Caco-2 (cell line): ENCODE measurements at regions of chr14 and their contacts with region 1.

Region 1: GRCh38 chr14:73026845-73027542 is at the start of gene ZFYVE1:
- DNase-seq: peak; percentile 96 to 97
- H3K4me3 ChIP-seq: peak within 1 kb of the TSS; percentile 74
- H3K4me3 Mint-ChIP-seq: peak within 1 kb of the TSS; percentile 91
- H3K27ac Mint-ChIP-seq: peak within 1 kb of the TSS; percentile 84
- H3K4me1 ChIP-seq: peaks cover 7% of the 10 kb centered on the region; the same call in 1 of the 2 replicates
- H3K4me1 Mint-ChIP-seq: no peaks in the 10 kb centered on the region
- H3K27me3 ChIP-seq: no peaks in the 10 kb centered on the region
- H3K27me3 Mint-ChIP-seq: no peaks in the 10 kb centered on the region
- CTCF ChIP-seq: no peak
- total RNA-seq, gene ZFYVE1: 10.8 and 10.9 TPM in 2 replicates

Region 2: GRCh38 chr14:72926292-72927028 is 100.5 kb before region 1 on chr14 and contains the start of gene DCAF4:
- CTCF ChIA-PET with region 1: no interaction called
- POLR2A ChIA-PET with region 1: no interaction called
- intact Hi-C with region 1: loop called (anchors 1 kb)
- DNase-seq: peak; percentile 97 to 99
- H3K4me3 ChIP-seq: peak within 1 kb of the TSS; percentile 78
- H3K4me3 Mint-ChIP-seq: peak within 1 kb of the TSS; percentile 87
- H3K27ac Mint-ChIP-seq: peak within 1 kb of the TSS; percentile 67
- H3K4me1 ChIP-seq: no peaks in the 10 kb centered on the region
- H3K4me1 Mint-ChIP-seq: no peaks in the 10 kb centered on the region
- H3K27me3 ChIP-seq: no peaks in the 10 kb centered on the region
- H3K27me3 Mint-ChIP-seq: peaks cover 6% of the 10 kb centered on the region
- CTCF ChIP-seq: no peak
- total RNA-seq, gene DCAF4: 20.1 and 21.1 TPM in 2 replicates

Region 3: GRCh38 chr14:73058224-73058921 is 31.4 kb after region 1 on chr14 and contains the start of gene RBM25:
- CTCF ChIA-PET with region 1: interaction called, 5 read pairs
- POLR2A ChIA-PET with region 1: interaction called, 35 read pairs
- intact Hi-C with region 1: loop called (anchors 1 kb)
- DNase-seq: peak; percentile 97 to 98
- H3K4me3 ChIP-seq: peak within 1 kb of the TSS; percentile 67
- H3K4me3 Mint-ChIP-seq: no peak within 1 kb of the TSS
- H3K27ac Mint-ChIP-seq: no peak within 1 kb of the TSS
- H3K4me1 ChIP-seq: peaks cover 12% of the 10 kb centered on the region; the same call in 1 of the 2 replicates
- H3K4me1 Mint-ChIP-seq: no peaks in the 10 kb centered on the region
- H3K27me3 ChIP-seq: no peaks in the 10 kb centered on the region
- H3K27me3 Mint-ChIP-seq: no peaks in the 10 kb centered on the region
- CTCF ChIP-seq: no peak
- total RNA-seq, gene RBM25: 89.3 and 98.8 TPM in 2 replicates

Region 4: GRCh38 chr14:73116079-73116665 is 89.2 kb after region 1 on chr14:
- CTCF ChIA-PET with region 1: no interaction called
- POLR2A ChIA-PET with region 1: interaction called, 12 read pairs
- intact Hi-C with region 1: no loop called
- DNase-seq: no peak
- H3K4me3 ChIP-seq: no peak overlapping the region
- H3K4me3 Mint-ChIP-seq: no peak overlapping the region
- H3K27ac Mint-ChIP-seq: no peak overlapping the region
- H3K4me1 ChIP-seq: no peaks in the 10 kb centered on the region
- H3K4me1 Mint-ChIP-seq: peaks cover 13% of the 10 kb centered on the region
- H3K27me3 ChIP-seq: no peaks in the 10 kb centered on the region
- H3K27me3 Mint-ChIP-seq: no peaks in the 10 kb centered on the region
- CTCF ChIP-seq: no peak

Region 5: GRCh38 chr14:73136387-73137225 is 109.6 kb after region 1 on chr14 and contains the start of gene PSEN1:
- CTCF ChIA-PET with region 1: no interaction called
- POLR2A ChIA-PET with region 1: interaction called, 12 read pairs
- intact Hi-C with region 1: no loop called
- DNase-seq: peak; percentile 96 to 98
- H3K4me3 ChIP-seq: peak within 1 kb of the TSS; percentile 82
- H3K4me3 Mint-ChIP-seq: peak within 1 kb of the TSS; percentile 74
- H3K27ac Mint-ChIP-seq: peak within 1 kb of the TSS; percentile 78
- H3K4me1 ChIP-seq: no peaks in the 10 kb centered on the region
- H3K4me1 Mint-ChIP-seq: peaks cover 8% of the 10 kb centered on the region
- H3K27me3 ChIP-seq: no peaks in the 10 kb centered on the region
- H3K27me3 Mint-ChIP-seq: no peaks in the 10 kb centered on the region
- CTCF ChIP-seq: no peak
- total RNA-seq, gene PSEN1: 74.8 and 76.8 TPM in 2 replicates